Stomach (tissue), 19 donors: ENCODE measurements at regions of chr16 and their contacts with region 1.

Region 1: DNA sequence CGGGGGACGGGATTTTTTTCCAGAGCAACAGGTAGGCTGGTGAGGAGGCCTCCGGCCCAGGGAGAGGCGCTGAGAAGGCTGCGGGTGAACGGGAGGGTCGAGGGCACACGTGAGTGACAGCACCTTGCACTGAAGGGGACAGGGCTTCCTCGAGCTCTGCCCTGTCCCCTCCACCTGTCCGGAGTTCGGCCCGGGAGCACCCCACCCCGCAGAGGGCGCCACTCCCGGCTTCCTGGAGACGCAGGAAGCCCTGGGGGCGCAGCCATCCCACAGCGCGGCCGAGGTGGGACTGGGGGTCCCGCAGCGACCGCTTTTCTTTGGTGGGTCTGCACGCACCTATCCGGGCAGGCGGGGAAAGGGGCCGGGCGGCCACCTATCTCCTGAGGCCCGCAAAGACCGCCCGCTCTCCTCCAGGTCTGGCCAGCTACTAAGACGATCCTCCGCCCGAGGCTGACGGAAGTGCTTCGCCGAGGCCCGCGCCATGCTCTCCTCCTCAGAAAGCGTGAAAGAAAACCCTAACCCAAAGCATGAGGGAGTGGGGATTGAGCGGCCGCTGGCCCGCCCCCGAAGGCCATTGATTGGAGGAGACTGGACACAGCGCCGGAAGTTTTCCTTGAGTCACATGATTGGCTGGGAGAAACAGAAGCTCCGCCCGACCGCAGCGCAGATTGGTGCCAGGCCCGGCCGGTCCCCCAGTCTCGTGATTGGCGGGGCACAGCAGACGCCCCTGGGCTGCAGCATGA is 34.3 kb downstream of the DDX19A start:
- DNase-seq: peak; percentile 97 to 99
- H3K4me3 ChIP-seq: peak overlapping the region; percentile 65 to 82 (median 75)
- H3K27ac ChIP-seq: peak overlapping the region; percentile 83 to 90 (median 84)
- H3K4me1 ChIP-seq: peaks cover 16 to 27% (median 22%) of the 10 kb centered on the region in 4 donors
- H3K27me3 ChIP-seq: no peaks in the 10 kb centered on the region
- CTCF ChIP-seq: peak in 1 of 7 experiments; percentile 18
- EP300 ChIP-seq: no peak
- POLR2A ChIP-seq: peak in 2 of 4 donors; percentile 49 to 52

Region 2: DNA sequence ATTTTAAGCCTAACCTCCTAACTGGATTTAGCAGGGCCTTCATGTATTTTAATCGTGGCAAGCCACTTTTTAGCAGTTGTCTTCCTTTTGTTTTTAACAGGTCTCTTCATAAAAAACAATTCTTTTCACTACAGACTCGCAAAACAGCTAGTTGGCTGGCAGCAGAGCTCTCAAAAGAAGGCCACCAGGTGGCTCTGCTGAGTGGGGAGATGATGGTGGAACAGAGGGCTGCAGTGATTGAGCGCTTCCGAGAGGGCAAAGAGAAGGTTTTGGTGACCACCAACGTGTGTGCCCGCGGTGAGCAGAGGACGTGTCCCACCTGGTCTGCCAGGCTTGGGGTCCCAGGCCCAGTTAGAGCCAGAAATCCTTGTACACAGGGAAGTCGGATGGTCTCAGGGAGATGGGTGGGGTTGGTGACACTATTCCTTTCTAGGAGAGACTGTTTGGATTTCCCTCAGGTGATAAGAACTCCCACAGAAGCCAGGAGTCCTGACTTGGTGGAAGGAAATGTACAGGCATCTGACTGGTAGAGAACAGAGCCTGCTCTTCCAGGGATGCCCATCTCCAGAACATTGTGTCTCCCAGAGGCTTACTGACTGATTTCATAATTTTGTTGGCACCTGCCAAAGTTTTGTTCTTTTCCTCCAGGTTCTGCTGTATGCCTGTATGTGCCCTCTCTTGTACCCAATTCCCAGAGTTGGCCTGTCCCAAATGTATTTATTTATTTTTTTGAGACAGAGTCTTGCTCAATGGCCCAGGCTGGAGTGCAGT is 49.3 kb before region 1 on chr16:
- intact Hi-C with region 1: no loop called
- DNase-seq: peak in 1 of 2 donors; percentile 12
- H3K4me3 ChIP-seq: no peak overlapping the region
- H3K27ac ChIP-seq: peak overlapping the region in 1 of 5 donors; percentile 25
- H3K4me1 ChIP-seq: peaks cover 0 to 6% (median 1%) of the 10 kb centered on the region in 4 donors
- H3K27me3 ChIP-seq: no peaks in the 10 kb centered on the region
- CTCF ChIP-seq: peak in 3 of 7 experiments; percentile 25 to 26 (median 25)
- EP300 ChIP-seq: no peak
- POLR2A ChIP-seq: no peak

Region 3: GRCh38 chr16:70444249-70445063 is 63.4 kb after region 1 on chr16:
- intact Hi-C with region 1: loop called (anchors 10 kb)
- DNase-seq: peak in 1 of 2 donors; percentile 49
- H3K4me3 ChIP-seq: no peak overlapping the region
- H3K27ac ChIP-seq: peak overlapping the region in 1 of 5 donors; percentile 57
- H3K4me1 ChIP-seq: peaks cover 4 to 16% (median 8%) of the 10 kb centered on the region in 4 donors
- H3K27me3 ChIP-seq: no peaks in the 10 kb centered on the region
- CTCF ChIP-seq: no peak
- EP300 ChIP-seq: no peak
- POLR2A ChIP-seq: no peak

Region 4: GRCh38 chr16:70576431-70577255 is 195.6 kb after region 1 on chr16:
- intact Hi-C with region 1: no loop called
- DNase-seq: peak in 1 of 2 donors; percentile 56
- H3K4me3 ChIP-seq: no peak overlapping the region
- H3K27ac ChIP-seq: peak overlapping the region in 2 of 5 donors; percentile 16 to 24
- H3K4me1 ChIP-seq: peaks cover 17 to 59% (median 38%) of the 10 kb centered on the region in 4 donors
- H3K27me3 ChIP-seq: no peaks in the 10 kb centered on the region
- CTCF ChIP-seq: no peak
- EP300 ChIP-seq: no peak
- POLR2A ChIP-seq: no peak